Right cardiac atrium (tissue), 5 donors: ENCODE measurements at regions of chr4 and their contacts with region 1.

Region 1: GRCh38 chr4:102564399-102565059 is 63.4 kb downstream of the NFKB1 start:
- DNase-seq: no peak
- ATAC-seq: no peak
- H3K4me3 ChIP-seq: no peak overlapping the region
- H3K27ac ChIP-seq: no peak overlapping the region
- H3K4me1 ChIP-seq: peaks cover 11% of the 10 kb centered on the region
- H3K27me3 ChIP-seq: no peaks in the 10 kb centered on the region

Region 2: GRCh38 chr4:102139132-102139573 is 425.4 kb before region 1 on chr4:
- intact Hi-C with region 1: no loop called
- DNase-seq: peak in 1 of 3 donors; percentile 16
- ATAC-seq: peak in 1 of 2 donors; percentile 60
- H3K4me3 ChIP-seq: no peak overlapping the region
- H3K27ac ChIP-seq: peak overlapping the region; percentile 58
- H3K4me1 ChIP-seq: no peaks in the 10 kb centered on the region
- H3K27me3 ChIP-seq: no peaks in the 10 kb centered on the region

Region 3: GRCh38 chr4:102335616-102336015 is 228.9 kb before region 1 on chr4:
- intact Hi-C with region 1: no loop called
- DNase-seq: no peak
- ATAC-seq: no peak
- H3K4me3 ChIP-seq: no peak overlapping the region
- H3K27ac ChIP-seq: no peak overlapping the region
- H3K4me1 ChIP-seq: no peaks in the 10 kb centered on the region
- H3K27me3 ChIP-seq: no peaks in the 10 kb centered on the region

Region 4: GRCh38 chr4:102500696-102501446 is 63.7 kb before region 1 on chr4 and contains the start of gene NFKB1:
- intact Hi-C with region 1: loop called in 1 of 4 experiments (anchors 10 kb)
- DNase-seq: peak; percentile 81 to 90 (median 89)
- ATAC-seq: peak; percentile 64
- H3K4me3 ChIP-seq: peak within 1 kb of the TSS; percentile 47
- H3K27ac ChIP-seq: peak within 1 kb of the TSS; percentile 83
- H3K4me1 ChIP-seq: no peaks in the 10 kb centered on the region
- H3K27me3 ChIP-seq: no peaks in the 10 kb centered on the region
- total RNA-seq, gene NFKB1: 20.7 to 24.0 (median 22.7) TPM